HepG2 (cell line): ENCODE measurements at regions of chr2 and their contacts with region 1.

Region 1: GRCh38 chr2:172465417-172466334 is 38.3 kb downstream of the ITGA6 start:
- DNase-seq: peak; percentile 95
- ATAC-seq: peak; percentile 93
- H3K4me3 ChIP-seq: peak overlapping the region in 1 of 3 experiments; percentile 36; a peak in 2 of 6 replicates
- H3K27ac ChIP-seq: peak overlapping the region; percentile 26
- H3K4me1 ChIP-seq: peaks cover 48% of the 10 kb centered on the region
- H3K27me3 ChIP-seq: no peaks in the 10 kb centered on the region
- CTCF ChIP-seq: peak; percentile 93
- EP300 ChIP-seq: peak in 1 of 2 experiments; percentile 74; a peak in 1 of 4 replicates
- POLR2A ChIP-seq: no peak
- RAD21 ChIP-seq: peak; percentile 93

Region 2: GRCh38 chr2:171574149-171574795 is 891.4 kb before region 1 on chr2:
- CTCF ChIA-PET with region 1: no interaction called
- POLR2A ChIA-PET with region 1: no interaction called
- in situ Hi-C with region 1: no loop called
- intact Hi-C with region 1: loop called (anchors 10 kb)
- DNase-seq: peak; percentile 66
- ATAC-seq: peak; percentile 99
- H3K4me3 ChIP-seq: peak overlapping the region; percentile 28 to 60 (median 60); a peak in 5 of 6 replicates
- H3K27ac ChIP-seq: no peak overlapping the region
- H3K4me1 ChIP-seq: peaks cover 7% of the 10 kb centered on the region; the same call in 1 of the 2 replicates
- H3K27me3 ChIP-seq: peaks cover 0 to 36% of the 10 kb centered on the region in 2 experiments; a peak in 2 of 5 replicates
- CTCF ChIP-seq: peak; percentile 97
- EP300 ChIP-seq: no peak
- POLR2A ChIP-seq: no peak
- RAD21 ChIP-seq: peak; percentile 95

Region 3: DNA sequence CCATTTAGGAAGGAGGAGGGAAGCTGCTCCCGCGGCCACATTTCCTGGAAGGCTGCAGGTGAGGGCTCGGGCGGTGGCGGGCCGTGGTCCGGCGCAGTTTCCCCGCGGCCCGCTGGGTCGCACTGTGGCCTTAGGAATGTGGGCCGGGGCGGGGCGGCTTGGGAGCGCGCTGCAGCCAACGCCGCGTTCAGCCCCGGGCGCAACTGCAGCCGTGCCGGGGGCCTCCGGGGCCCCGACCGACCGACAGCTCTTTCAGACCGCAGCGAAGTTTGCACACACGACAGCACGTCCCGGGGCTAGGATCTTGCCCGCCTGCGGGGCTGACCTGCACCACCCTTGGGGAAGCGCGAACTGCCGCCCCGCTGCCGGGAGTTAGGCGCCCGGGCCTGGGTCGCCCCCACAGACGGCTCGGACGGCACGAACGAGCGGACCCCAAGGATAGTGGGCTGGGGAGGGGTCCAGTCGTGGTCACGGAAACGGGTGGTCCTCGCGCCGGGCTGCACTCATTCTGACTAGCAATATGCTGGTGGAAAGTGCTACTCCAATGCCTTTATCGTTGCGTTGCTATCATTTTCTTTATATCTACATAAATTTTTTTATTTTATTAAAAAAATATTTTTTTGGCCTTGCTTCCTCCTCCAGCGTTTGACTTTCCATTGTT is 293.0 kb before region 1 on chr2:
- CTCF ChIA-PET with region 1: interaction called, 79 read pairs
- POLR2A ChIA-PET with region 1: interaction called, 7 read pairs
- in situ Hi-C with region 1: loop called (anchors 5 kb)
- intact Hi-C with region 1: loop called (anchors 1 kb)
- DNase-seq: peak; percentile 43
- ATAC-seq: peak; percentile 100
- H3K4me3 ChIP-seq: peak overlapping the region; percentile 55 to 84 (median 62)
- H3K27ac ChIP-seq: no peak overlapping the region
- H3K4me1 ChIP-seq: peaks cover 6% of the 10 kb centered on the region
- H3K27me3 ChIP-seq: peaks cover 3 to 22% of the 10 kb centered on the region in 2 experiments; a peak in 4 of 5 replicates
- CTCF ChIP-seq: peak; percentile 96
- EP300 ChIP-seq: no peak
- POLR2A ChIP-seq: no peak
- RAD21 ChIP-seq: peak; percentile 100

Region 4: DNA sequence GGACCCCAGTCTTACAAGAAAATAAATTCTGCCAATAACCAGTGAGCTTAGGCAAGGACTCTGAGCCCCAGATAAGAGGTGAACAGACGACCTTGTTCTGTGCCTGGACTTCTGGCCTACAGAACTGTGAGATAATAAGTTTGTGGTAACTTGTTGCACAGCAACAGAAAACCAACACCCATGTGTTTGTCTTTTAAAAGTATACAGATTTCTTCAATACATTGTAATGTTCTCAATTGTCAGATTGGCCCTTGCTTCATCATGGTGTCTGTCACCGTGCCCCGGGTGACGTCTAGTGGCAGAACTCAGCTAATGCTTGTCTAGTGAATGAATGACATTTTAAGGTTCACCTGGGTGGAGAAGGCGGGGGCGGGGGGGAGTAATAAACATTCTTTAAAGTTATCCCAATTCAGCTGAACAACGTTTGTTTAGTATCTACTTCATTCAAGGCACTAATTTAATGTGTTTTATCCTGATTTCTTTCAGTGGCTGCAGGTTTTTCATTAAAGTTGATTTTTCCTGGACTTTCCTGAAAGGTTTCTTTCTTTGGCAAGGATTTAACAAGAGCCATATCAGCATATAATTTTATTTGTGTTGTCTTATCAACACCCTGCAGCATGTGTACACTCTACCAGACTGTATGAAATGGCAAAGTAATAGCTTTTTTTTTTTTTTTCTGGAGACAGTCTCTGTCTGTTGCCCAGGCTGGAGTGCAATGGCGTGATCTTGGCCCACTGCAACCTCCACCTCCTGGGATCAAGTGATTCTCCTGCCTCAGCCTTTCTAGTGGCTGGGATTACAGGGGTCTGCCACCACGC is 239.2 kb before region 1 on chr2:
- CTCF ChIA-PET with region 1: interaction called, 8 read pairs
- POLR2A ChIA-PET with region 1: no interaction called
- in situ Hi-C with region 1: no loop called
- intact Hi-C with region 1: loop called (anchors 1 kb)
- DNase-seq: peak; percentile 63
- ATAC-seq: peak; percentile 88
- H3K4me3 ChIP-seq: no peak overlapping the region
- H3K27ac ChIP-seq: no peak overlapping the region
- H3K4me1 ChIP-seq: peaks cover 15% of the 10 kb centered on the region; the same call in 1 of the 2 replicates
- H3K27me3 ChIP-seq: peaks cover 1 to 25% of the 10 kb centered on the region in 2 experiments; a peak in 4 of 5 replicates
- CTCF ChIP-seq: peak; percentile 64
- EP300 ChIP-seq: no peak; a peak in 1 of 4 replicates
- POLR2A ChIP-seq: no peak
- RAD21 ChIP-seq: no peak

Region 5: DNA sequence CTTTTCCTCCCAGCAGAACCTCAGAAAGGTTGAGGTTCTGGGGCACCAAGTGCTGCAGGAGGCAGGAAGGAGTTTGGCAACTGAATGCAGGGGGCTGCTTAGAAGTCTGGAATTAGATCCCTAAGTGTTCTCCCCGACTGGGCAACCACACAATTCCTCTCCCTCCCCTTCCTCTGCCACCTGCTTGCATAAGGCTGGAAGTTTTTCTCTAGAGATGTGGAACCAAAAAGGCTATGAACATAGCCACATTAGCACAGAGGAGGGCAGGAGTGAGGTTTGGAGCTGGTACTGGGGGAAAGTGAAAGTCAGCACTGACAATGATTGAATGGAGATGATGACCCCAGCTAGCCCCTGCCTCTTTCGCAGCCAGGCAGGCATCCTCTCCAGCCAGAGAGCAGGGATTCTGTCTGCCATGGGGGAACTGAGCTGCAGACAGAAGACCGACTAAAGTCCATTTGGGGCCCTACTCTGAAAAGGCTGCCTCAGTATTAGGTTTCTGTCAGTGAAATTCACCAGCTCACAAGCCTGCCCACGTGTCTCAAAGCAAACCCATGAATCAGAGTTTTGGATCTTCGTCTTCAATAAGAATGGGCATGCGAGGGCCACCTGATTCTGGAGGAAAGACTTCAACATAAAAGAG is 126.2 kb before region 1 on chr2:
- CTCF ChIA-PET with region 1: no interaction called
- POLR2A ChIA-PET with region 1: interaction called, 3 read pairs
- in situ Hi-C with region 1: no loop called
- intact Hi-C with region 1: loop called (anchors 2 kb)
- DNase-seq: peak; percentile 89
- ATAC-seq: peak; percentile 83
- H3K4me3 ChIP-seq: peak overlapping the region; percentile 19 to 65 (median 62)
- H3K27ac ChIP-seq: peak overlapping the region; percentile 59
- H3K4me1 ChIP-seq: peaks cover 80% of the 10 kb centered on the region
- H3K27me3 ChIP-seq: peaks cover 0 to 3% of the 10 kb centered on the region in 2 experiments; a peak in 1 of 5 replicates
- CTCF ChIP-seq: peak; percentile 52
- EP300 ChIP-seq: peak; percentile 72 to 79; a peak in 3 of 4 replicates
- POLR2A ChIP-seq: peak in 1 of 2 experiments; percentile 40; a peak in 2 of 4 replicates
- RAD21 ChIP-seq: peak; percentile 51; the same call in 1 of the 2 replicates

Region 6: GRCh38 chr2:172442072-172442895 is 23.4 kb before region 1 on chr2:
- CTCF ChIA-PET with region 1: no interaction called
- POLR2A ChIA-PET with region 1: interaction called, 6 read pairs
- in situ Hi-C with region 1: no loop called
- intact Hi-C with region 1: loop called (anchors 2 kb)
- DNase-seq: peak; percentile 75
- ATAC-seq: peak; percentile 77
- H3K4me3 ChIP-seq: no peak overlapping the region
- H3K27ac ChIP-seq: peak overlapping the region; percentile 5
- H3K4me1 ChIP-seq: peaks cover 60% of the 10 kb centered on the region
- H3K27me3 ChIP-seq: no peaks in the 10 kb centered on the region
- CTCF ChIP-seq: no peak
- EP300 ChIP-seq: peak in 1 of 2 experiments; percentile 25; a peak in 1 of 4 replicates
- POLR2A ChIP-seq: no peak
- RAD21 ChIP-seq: no peak

Region 7: DNA sequence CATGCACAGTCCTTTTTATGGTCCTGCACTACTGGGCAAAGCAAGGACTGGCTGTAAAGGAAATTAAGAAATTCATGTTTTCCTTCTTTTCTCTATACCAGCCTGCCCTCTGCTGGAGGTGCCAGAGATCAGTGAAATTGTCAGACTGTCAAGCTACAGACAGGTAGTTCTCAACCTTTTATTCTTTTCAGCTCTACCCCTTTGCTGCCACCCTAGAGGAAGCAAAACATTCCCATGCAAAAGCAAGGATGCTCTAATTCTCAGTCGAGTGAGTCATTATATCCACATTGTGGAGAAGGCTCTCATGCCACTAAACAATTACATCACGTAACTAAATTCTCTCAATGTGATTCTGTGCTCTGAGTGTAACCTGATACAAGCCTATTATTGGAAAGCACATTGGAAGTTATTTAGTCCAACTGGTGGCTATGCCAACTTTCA is 244.9 kb after region 1 on chr2:
- CTCF ChIA-PET with region 1: no interaction called
- POLR2A ChIA-PET with region 1: no interaction called
- in situ Hi-C with region 1: no loop called
- intact Hi-C with region 1: loop called (anchors 5 kb)
- DNase-seq: peak; percentile 25
- ATAC-seq: peak; percentile 60
- H3K4me3 ChIP-seq: no peak overlapping the region
- H3K27ac ChIP-seq: no peak overlapping the region
- H3K4me1 ChIP-seq: no peaks in the 10 kb centered on the region
- H3K27me3 ChIP-seq: peaks cover 0 to 5% of the 10 kb centered on the region in 2 experiments; a peak in 2 of 5 replicates
- CTCF ChIP-seq: peak; percentile 72
- EP300 ChIP-seq: no peak
- POLR2A ChIP-seq: no peak
- RAD21 ChIP-seq: peak; percentile 25; the same call in 1 of the 2 replicates